Activated T-helper 1 cell treated with anti-CD3 and anti-CD28 coated beads, Interleukin-12 subunit alpha, Interleukin-12 subunit beta, Interleukin-2, Interleukin-4 antibody, amounts not matched to agents 30 ng/mL and 10 ng/mL and 1 ng/mL, durations not matched to agents 14 hours and 24 hours and 36 hours (primary cell): ENCODE measurements at regions of chr1 and their contacts with region 1.

Region 1: GRCh38 chr1:230310381-230311163 is 115.6 kb downstream of the PGBD5 start:
- DNase-seq: peak; percentile 43
- H3K4me3 Mint-ChIP-seq: no peak overlapping the region
- H3K27ac Mint-ChIP-seq: no peak overlapping the region
- H3K4me1 Mint-ChIP-seq: peaks cover 4% of the 10 kb centered on the region
- H3K27me3 Mint-ChIP-seq: peaks cover 14% of the 10 kb centered on the region

Region 2: DNA sequence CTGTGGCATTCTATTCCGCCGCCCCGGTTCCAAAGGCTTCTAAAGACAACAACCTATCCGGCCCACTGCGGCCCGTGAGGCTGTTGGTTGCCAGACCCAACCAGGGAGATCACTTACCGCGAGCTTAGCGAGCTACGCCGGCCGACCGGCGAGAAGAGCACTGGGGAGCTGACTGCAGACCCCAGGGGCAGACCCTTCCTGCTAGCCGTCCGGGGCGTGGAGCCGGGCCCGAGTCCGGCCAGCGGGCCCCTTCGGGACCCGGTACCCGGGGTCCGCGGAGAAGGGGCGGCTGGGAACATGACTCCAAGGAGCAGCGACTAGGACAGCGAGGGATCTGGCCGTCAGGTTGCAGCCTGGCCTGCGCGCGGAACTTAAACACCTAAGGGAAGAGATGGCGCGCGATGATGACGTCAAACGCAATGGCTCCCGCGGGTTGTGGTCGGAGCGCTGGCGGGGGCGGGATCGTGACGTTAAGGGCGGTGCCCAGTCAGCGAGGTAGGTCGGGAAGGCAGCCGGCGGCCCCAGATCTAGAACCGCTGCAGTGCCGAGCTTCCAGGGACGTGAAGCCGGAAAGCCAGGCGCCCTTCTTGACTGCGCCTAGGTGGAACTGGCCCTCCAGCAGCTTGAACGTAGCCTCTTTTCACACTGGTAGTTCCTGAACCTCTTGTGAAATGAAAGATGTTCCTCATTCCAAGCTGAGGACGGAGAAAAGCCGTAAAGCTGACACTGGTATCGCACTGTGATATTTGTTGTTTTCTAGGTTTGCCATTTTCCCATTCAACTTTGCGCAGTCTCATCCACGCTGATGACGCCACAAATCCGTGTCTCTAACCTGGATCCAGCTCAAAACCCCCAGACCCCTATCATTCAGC is 802.4 kb before region 1 on chr1 and contains the start of gene NUP133:
- intact Hi-C with region 1: loop called (anchors 5 kb)
- DNase-seq: peak; percentile 97
- H3K4me3 Mint-ChIP-seq: peak within 1 kb of the TSS; percentile 96
- H3K27ac Mint-ChIP-seq: peak within 1 kb of the TSS; percentile 97
- H3K4me1 Mint-ChIP-seq: peaks cover 25% of the 10 kb centered on the region
- H3K27me3 Mint-ChIP-seq: peaks cover 4% of the 10 kb centered on the region
- total RNA-seq, gene NUP133: 47.9 and 49.1 TPM in 2 replicates

Region 3: GRCh38 chr1:229714964-229715603 is 595.5 kb before region 1 on chr1:
- intact Hi-C with region 1: loop called (anchors 2 kb)
- DNase-seq: no peak
- H3K4me3 Mint-ChIP-seq: no peak overlapping the region
- H3K27ac Mint-ChIP-seq: no peak overlapping the region
- H3K4me1 Mint-ChIP-seq: no peaks in the 10 kb centered on the region
- H3K27me3 Mint-ChIP-seq: peaks cover 2% of the 10 kb centered on the region

Region 4: GRCh38 chr1:229856009-229856650 is 454.4 kb before region 1 on chr1:
- intact Hi-C with region 1: loop called (anchors 10 kb)
- DNase-seq: peak; percentile 16
- H3K4me3 Mint-ChIP-seq: peak overlapping the region; percentile 58
- H3K27ac Mint-ChIP-seq: no peak overlapping the region
- H3K4me1 Mint-ChIP-seq: peaks cover 10% of the 10 kb centered on the region
- H3K27me3 Mint-ChIP-seq: peaks cover 9% of the 10 kb centered on the region

Region 5: DNA sequence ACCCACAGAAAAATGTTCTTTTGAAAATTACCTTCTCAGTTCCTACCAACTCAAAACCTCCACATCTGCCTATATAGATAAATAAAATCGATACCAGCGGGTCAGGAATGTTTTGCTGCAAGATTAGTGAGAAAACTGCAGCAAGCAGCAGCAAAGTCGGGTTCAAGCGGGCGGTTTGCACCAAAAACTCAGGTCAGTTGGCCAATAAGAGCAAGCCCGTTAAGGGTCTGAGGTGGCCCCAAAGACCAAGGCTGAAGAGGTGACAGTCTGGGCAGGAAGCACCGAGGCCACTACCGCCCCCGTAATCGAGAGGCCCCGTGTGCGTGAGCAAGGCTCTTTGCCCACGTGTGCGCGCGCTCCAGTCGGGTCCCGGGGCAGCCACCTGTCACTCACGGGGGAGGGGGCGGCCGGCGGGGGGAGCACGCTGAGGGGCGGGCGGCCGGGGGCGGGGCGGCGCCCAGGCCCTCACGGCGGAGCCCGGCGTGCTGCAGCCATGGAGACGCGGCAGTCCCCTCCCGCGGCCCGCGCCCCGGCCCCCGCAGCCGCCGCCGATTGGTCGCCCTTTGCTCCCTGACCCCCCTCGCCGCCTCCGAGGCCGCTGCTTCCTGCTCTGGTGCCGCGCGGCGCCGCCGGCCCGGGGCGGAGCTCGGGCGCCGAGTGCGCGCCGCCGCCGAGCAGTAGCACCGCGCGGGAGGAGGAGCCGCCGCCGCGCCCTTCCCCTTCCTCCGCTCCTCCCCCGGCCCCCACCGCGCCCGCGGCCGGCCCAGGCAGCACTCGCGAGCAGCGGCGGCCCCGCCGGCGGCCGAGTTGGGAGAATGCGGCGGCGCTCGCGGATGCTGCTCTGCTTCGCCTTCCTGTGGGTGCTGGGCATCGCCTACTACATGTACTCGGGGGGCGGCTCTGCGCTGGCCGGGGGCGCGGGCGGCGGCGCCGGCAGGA is 243.8 kb before region 1 on chr1 and contains the start of gene GALNT2:
- intact Hi-C with region 1: loop called (anchors 1 kb)
- DNase-seq: peak; percentile 88
- H3K4me3 Mint-ChIP-seq: peak within 1 kb of the TSS; percentile 93
- H3K27ac Mint-ChIP-seq: peak within 1 kb of the TSS; percentile 89
- H3K4me1 Mint-ChIP-seq: peaks cover 48% of the 10 kb centered on the region
- H3K27me3 Mint-ChIP-seq: peaks cover 3% of the 10 kb centered on the region
- total RNA-seq, gene GALNT2: 67.6 and 67.9 TPM in 2 replicates

Region 6: GRCh38 chr1:230167419-230167852 is 143.1 kb before region 1 on chr1:
- intact Hi-C with region 1: loop called (anchors 5 kb)
- DNase-seq: peak; percentile 12
- H3K4me3 Mint-ChIP-seq: no peak overlapping the region
- H3K27ac Mint-ChIP-seq: no peak overlapping the region
- H3K4me1 Mint-ChIP-seq: peaks cover 39% of the 10 kb centered on the region
- H3K27me3 Mint-ChIP-seq: no peaks in the 10 kb centered on the region

Region 7: GRCh38 chr1:230476622-230477003 is 166.0 kb after region 1 on chr1:
- intact Hi-C with region 1: no loop called
- DNase-seq: no peak
- H3K4me3 Mint-ChIP-seq: no peak overlapping the region
- H3K27ac Mint-ChIP-seq: no peak overlapping the region
- H3K4me1 Mint-ChIP-seq: no peaks in the 10 kb centered on the region
- H3K27me3 Mint-ChIP-seq: peaks cover 28% of the 10 kb centered on the region